Mammary epithelial cell (primary cell): ENCODE measurements at regions of chr2 and their contacts with region 1.

Region 1: DNA sequence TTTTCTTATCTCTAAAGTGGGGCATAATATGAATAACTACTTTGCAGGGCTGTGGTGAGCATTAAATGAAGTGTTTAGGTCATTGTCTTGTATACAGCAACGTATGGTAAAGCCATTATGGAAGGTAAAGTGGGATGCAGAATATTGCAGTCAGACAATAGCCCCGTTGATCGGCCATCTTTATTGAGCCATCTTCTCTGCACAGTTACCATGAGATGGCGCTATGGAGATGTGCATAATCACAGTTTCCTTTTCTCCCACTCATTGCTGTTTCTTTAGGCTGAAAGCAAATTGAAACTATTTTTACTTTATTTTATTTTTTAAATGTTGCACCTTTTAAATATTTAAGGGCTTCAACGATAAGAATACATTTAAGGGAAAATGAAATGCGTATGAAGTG is 108.9 kb downstream of the THSD7B start:
- DNase-seq: no peak
- H3K4me3 ChIP-seq: no peak overlapping the region
- H3K27ac ChIP-seq: no peak overlapping the region
- H3K4me1 ChIP-seq: no peaks in the 10 kb centered on the region
- H3K27me3 ChIP-seq: no peaks in the 10 kb centered on the region
- CTCF ChIP-seq: peak; percentile 35 to 54

Region 2: GRCh38 chr2:136131484-136131960 is 742.7 kb before region 1 on chr2:
- CTCF ChIA-PET with region 1: no interaction called
- dilution Hi-C with region 1: no loop called
- in situ Hi-C with region 1: no loop called
- intact Hi-C with region 1: no loop called
- DNase-seq: no peak
- H3K4me3 ChIP-seq: no peak overlapping the region
- H3K27ac ChIP-seq: no peak overlapping the region
- H3K4me1 ChIP-seq: peaks cover 2% of the 10 kb centered on the region
- H3K27me3 ChIP-seq: peaks cover 10% of the 10 kb centered on the region
- CTCF ChIP-seq: no peak

Region 3: GRCh38 chr2:137050949-137051348 is 176.7 kb after region 1 on chr2:
- CTCF ChIA-PET with region 1: no interaction called
- dilution Hi-C with region 1: no loop called
- in situ Hi-C with region 1: no loop called
- intact Hi-C with region 1: loop called (anchors 1 kb)
- DNase-seq: no peak
- H3K4me3 ChIP-seq: no peak overlapping the region
- H3K27ac ChIP-seq: no peak overlapping the region
- H3K4me1 ChIP-seq: no peaks in the 10 kb centered on the region
- H3K27me3 ChIP-seq: no peaks in the 10 kb centered on the region
- CTCF ChIP-seq: peak; percentile 37 to 53